Heart left ventricle (tissue), 16 donors: ENCODE measurements at regions of chr18 and their contacts with region 1.

Region 1: DNA sequence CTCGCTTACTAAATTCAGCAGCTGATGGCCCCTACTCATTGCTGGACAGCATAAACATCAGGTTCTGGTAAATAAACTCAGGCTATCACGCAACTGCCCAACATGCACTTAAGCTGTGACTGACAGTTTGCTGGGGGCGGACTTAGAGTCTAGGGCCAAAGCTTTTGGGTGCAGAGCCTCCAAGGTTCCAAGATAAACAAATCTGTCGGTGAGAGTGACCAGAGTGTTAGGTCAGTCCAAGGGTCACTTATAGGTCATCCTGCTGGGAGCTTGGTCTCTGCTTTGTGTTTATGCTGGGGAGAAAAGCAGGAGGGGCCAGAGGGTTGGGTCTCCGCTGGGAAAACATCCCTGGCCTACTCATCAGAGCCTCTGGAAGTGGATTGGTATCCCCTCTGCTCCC is 188.6 kb upstream of the GATA6 start:
- DNase-seq: no peak
- ATAC-seq: no peak
- H3K4me3 ChIP-seq: no peak overlapping the region
- H3K27ac ChIP-seq: no peak overlapping the region
- H3K4me1 ChIP-seq: no peaks in the 10 kb centered on the region
- H3K27me3 ChIP-seq: no peaks in the 10 kb centered on the region
- CTCF ChIP-seq: no peak
- POLR2A ChIP-seq: no peak

Region 2: DNA sequence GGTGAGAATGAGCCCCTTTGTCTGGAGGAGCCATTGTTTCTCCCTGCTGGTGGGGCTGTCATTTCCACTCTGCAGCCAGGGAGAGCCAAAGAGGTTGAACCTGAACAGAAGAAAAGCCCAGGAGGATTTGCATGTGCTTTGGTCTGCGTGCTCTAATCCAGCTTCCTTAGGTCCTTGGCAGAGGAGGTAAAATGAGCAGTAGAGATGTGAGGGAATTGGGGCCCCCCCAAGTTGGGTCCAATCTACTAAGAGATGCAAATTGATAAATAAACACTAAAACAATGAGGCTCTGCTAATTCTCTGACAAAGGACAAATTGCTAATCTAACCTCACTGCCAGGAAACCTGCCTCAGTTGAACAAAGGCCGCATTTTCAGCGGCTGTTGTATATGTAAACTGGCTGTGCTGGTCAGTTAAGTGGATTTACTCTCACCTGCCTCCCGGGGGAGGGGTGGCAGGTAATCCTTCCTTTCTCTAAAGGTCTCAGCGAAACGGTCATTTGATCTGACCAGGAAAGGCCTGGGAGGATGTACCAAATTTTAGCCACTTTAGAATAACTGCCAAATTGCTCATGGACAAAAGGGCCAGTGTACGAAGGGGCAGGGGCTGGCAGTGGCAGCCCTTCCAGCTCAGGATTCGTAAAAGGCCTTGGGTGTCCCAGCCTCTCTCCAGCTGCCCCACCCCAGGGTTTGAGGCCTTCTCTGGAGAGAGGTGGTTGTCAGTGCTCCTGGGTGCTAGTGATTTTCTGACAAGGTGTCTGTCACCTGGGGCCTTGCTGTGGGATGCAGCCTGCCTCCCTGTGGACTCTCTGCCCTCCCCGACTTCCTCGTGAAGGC is 46.6 kb before region 1 on chr18:
- intact Hi-C with region 1: loop called in 1 of 10 experiments (anchors 10 kb)
- DNase-seq: no peak
- ATAC-seq: no peak
- H3K4me3 ChIP-seq: no peak overlapping the region
- H3K27ac ChIP-seq: no peak overlapping the region
- H3K4me1 ChIP-seq: no peaks in the 10 kb centered on the region
- H3K27me3 ChIP-seq: no peaks in the 10 kb centered on the region
- CTCF ChIP-seq: no peak
- POLR2A ChIP-seq: no peak